ENCODE measurements at regions of chr6 and their contacts with region 1.

Region 1: DNA sequence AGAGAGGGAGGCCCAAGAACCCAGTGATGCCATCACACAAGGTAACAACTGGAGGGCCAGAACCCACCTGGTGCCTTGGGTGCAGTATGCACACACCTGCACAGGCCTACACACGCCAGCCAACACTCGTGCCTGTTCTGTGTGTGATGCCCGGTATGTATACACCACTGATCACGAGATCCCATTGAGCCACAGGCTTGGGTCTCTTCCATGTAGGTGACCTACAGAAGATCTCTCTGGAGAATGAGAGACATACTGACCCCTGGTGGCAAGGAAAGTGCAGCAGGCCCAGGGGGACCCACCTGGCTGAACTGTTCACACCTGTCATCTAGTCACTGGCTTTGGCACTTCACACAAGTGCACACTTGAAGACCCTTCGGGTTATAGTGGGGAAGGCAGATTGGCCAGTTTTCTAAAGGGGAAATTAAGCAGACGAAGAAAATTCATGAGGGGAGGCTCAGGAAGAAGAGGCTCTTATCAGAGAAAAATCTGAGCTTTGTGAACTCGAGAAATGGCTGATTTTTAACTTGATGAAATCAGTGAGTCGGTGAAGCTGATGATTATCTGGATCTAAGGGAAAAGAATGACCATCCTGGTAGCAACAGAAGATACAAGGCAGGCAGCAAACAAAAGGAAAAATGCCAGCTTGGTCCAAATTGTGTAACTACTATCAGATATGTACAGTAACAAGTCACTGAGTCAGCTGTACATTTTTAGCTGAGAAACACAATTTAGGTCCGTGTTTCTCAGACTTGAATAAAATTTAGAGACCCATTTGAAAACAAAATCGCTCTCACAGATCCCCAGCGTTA is 69.1 kb upstream of the PBOV1 start:
- DNase-seq: peak; percentile 26 to 53 (median 39)
- H3K4me3 ChIP-seq: no peak overlapping the region
- H3K4me3 Mint-ChIP-seq: peak overlapping the region in 1 of 8 donors; percentile 48
- H3K27ac ChIP-seq: no peak overlapping the region
- H3K27ac Mint-ChIP-seq: peak overlapping the region in 1 of 7 donors; percentile 31
- H3K4me1 ChIP-seq: no peaks in the 10 kb centered on the region
- H3K4me1 Mint-ChIP-seq: peaks cover 0 to 1% (median 0%) of the 10 kb centered on the region in 4 donors
- H3K27me3 ChIP-seq: no peaks in the 10 kb centered on the region
- H3K27me3 Mint-ChIP-seq: peaks cover 0 to 3% of the 10 kb centered on the region in 2 donors

Region 2: GRCh38 chr6:138267971-138268895 is 19.1 kb before region 1 on chr6:
- CTCF ChIA-PET with region 1: no interaction called
- POLR2A ChIA-PET with region 1: no interaction called
- intact Hi-C with region 1: no loop called
- DNase-seq: no peak
- H3K4me3 ChIP-seq: no peak overlapping the region
- H3K4me3 Mint-ChIP-seq: no peak overlapping the region
- H3K27ac ChIP-seq: no peak overlapping the region
- H3K27ac Mint-ChIP-seq: no peak overlapping the region
- H3K4me1 ChIP-seq: no peaks in the 10 kb centered on the region
- H3K4me1 Mint-ChIP-seq: no peaks in the 10 kb centered on the region
- H3K27me3 ChIP-seq: no peaks in the 10 kb centered on the region
- H3K27me3 Mint-ChIP-seq: peaks cover 9 to 11% of the 10 kb centered on the region in 2 donors

Region 3: DNA sequence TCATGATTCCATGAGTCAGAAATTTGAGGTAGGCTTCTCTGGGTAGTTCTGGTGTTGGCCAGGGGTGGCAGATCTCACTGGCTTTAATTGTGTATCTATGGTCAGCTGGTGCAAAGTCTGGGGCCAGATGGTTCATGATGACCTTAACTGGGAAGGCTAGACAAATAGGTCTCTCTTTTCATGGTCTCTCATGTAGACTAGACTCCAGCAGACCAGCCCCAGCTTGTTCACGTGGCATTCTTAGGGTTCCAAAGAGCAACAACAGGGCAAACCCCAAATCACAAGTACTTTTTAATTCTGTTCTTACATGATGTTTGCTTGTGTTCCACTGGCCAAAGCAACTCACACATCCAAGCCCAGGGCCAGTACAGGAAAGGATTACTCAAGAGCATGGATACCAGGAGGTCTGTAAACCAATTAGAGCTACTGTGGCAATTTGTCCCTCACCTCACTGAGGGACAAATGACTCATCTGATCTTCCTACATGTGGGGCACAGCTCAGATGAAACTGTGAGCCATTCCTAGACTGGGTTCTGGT is 10.5 kb after region 1 on chr6:
- CTCF ChIA-PET with region 1: interaction called, 16 read pairs
- POLR2A ChIA-PET with region 1: no interaction called
- intact Hi-C with region 1: no loop called
- DNase-seq: no peak
- H3K4me3 ChIP-seq: no peak overlapping the region
- H3K4me3 Mint-ChIP-seq: no peak overlapping the region
- H3K27ac ChIP-seq: no peak overlapping the region
- H3K27ac Mint-ChIP-seq: no peak overlapping the region
- H3K4me1 ChIP-seq: no peaks in the 10 kb centered on the region
- H3K4me1 Mint-ChIP-seq: no peaks in the 10 kb centered on the region
- H3K27me3 ChIP-seq: no peaks in the 10 kb centered on the region
- H3K27me3 Mint-ChIP-seq: peaks cover 15 to 18% of the 10 kb centered on the region in 2 donors

Region 4: GRCh38 chr6:138328210-138328609 is 40.9 kb after region 1 on chr6:
- CTCF ChIA-PET with region 1: no interaction called
- POLR2A ChIA-PET with region 1: no interaction called
- intact Hi-C with region 1: no loop called
- DNase-seq: no peak
- H3K4me3 ChIP-seq: no peak overlapping the region
- H3K4me3 Mint-ChIP-seq: no peak overlapping the region
- H3K27ac ChIP-seq: no peak overlapping the region
- H3K27ac Mint-ChIP-seq: no peak overlapping the region
- H3K4me1 ChIP-seq: no peaks in the 10 kb centered on the region
- H3K4me1 Mint-ChIP-seq: no peaks in the 10 kb centered on the region
- H3K27me3 ChIP-seq: no peaks in the 10 kb centered on the region
- H3K27me3 Mint-ChIP-seq: peaks cover 3 to 8% of the 10 kb centered on the region in 2 donors